ENCODE measurements at regions of chr20 and their contacts with region 1.

Region 1: GRCh38 chr20:46363800-46364634 is 42.4 kb downstream of the ELMO2 start:
- DNase-seq: peak; percentile 82 to 89 (median 86)
- H3K4me3 ChIP-seq: peak overlapping the region; percentile 73 to 95
- H3K4me3 Mint-ChIP-seq: peak overlapping the region; percentile 88 to 97 (median 92)
- H3K27ac ChIP-seq: peak overlapping the region; percentile 99
- H3K27ac Mint-ChIP-seq: peak overlapping the region; percentile 84 to 99 (median 98)
- H3K4me1 ChIP-seq: peaks cover 78% of the 10 kb centered on the region
- H3K4me1 Mint-ChIP-seq: peaks cover 63 to 83% (median 73%) of the 10 kb centered on the region in 4 donors
- H3K27me3 ChIP-seq: no peaks in the 10 kb centered on the region
- H3K27me3 Mint-ChIP-seq: no peaks in the 10 kb centered on the region

Region 2: DNA sequence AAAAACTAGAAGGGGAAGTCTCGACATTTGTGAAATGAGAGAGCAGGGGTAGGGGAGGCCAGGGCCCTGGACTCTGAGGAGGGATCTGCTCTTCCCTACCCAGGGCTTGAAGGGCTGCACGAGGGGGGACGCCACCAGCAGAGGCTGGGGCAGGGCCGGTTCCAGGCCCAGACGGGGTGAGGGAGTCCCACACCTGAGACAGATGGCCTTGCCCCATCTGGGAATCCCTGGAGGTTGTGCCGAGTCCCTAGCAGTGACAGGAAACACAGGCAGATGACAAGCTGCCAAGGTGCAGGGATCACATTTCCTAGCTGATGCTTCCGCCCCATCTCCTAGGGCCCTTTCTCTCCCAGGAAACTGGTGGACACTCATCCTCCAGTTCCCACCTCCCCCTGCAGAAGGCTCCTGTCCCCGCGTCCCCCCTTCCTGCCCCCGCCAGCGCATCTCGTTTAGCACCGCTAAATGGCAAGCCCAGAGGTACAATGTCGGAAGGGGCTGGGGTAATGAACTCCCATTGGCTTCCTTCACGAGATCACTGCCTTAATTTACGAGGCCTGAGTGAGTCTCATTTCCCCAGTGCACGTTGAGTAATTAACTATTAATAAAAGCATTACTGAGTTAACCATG is 20.6 kb before region 1 on chr20:
- CTCF ChIA-PET with region 1: interaction called, 6 read pairs
- POLR2A ChIA-PET with region 1: interaction called, 17 read pairs
- intact Hi-C with region 1: no loop called
- DNase-seq: no peak
- H3K4me3 ChIP-seq: no peak overlapping the region
- H3K4me3 Mint-ChIP-seq: peak overlapping the region; percentile 40 to 85 (median 71)
- H3K27ac ChIP-seq: no peak overlapping the region
- H3K27ac Mint-ChIP-seq: peak overlapping the region in 5 of 7 donors; percentile 26 to 68 (median 57)
- H3K4me1 ChIP-seq: peaks cover 20% of the 10 kb centered on the region
- H3K4me1 Mint-ChIP-seq: peaks cover 20 to 41% (median 24%) of the 10 kb centered on the region in 4 donors
- H3K27me3 ChIP-seq: peaks cover 11% of the 10 kb centered on the region
- H3K27me3 Mint-ChIP-seq: peaks cover 13 to 16% of the 10 kb centered on the region in 2 donors

Region 3: DNA sequence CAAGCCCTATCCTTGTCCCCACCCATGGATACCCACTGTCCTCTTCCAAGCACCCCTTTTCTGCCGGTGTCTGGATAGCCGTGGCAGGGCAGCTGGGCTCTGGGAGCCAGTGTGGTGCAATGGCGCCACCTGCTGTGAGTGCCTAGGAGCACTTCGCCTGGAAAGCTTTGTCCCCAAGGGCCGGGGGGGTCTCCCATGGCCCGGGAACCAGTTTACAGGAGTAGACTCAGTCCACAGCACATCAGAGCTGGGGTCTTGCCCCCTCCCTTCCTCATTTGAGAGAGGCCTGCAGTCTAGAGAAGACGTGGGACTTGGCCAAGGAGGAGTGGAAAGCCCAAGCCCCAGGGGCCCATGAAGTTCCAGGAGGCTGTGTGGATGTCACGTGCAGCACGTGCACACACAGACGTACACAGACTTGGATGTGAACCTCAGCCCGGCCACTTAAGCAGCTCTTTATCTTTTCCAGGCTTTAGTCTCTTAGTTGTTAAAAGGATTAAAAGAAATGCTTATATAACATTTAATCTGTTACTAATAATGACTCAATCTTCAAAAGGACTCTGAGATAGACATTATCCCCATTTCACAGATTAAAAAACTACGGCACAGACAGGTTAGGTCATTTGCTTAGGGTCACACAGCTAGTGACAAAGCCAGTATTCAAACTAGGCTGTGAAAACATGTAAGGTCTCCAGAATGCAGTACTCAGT is 14.8 kb before region 1 on chr20:
- CTCF ChIA-PET with region 1: interaction called, 6 read pairs
- POLR2A ChIA-PET with region 1: interaction called, 17 read pairs
- intact Hi-C with region 1: no loop called
- DNase-seq: peak in 4 of 5 donors; percentile 30 to 42 (median 36)
- H3K4me3 ChIP-seq: no peak overlapping the region
- H3K4me3 Mint-ChIP-seq: no peak overlapping the region
- H3K27ac ChIP-seq: no peak overlapping the region
- H3K27ac Mint-ChIP-seq: peak overlapping the region in 5 of 7 donors; percentile 9 to 82 (median 46)
- H3K4me1 ChIP-seq: peaks cover 5% of the 10 kb centered on the region
- H3K4me1 Mint-ChIP-seq: peaks cover 15 to 37% (median 21%) of the 10 kb centered on the region in 4 donors
- H3K27me3 ChIP-seq: no peaks in the 10 kb centered on the region
- H3K27me3 Mint-ChIP-seq: no peaks in the 10 kb centered on the region

Region 4: DNA sequence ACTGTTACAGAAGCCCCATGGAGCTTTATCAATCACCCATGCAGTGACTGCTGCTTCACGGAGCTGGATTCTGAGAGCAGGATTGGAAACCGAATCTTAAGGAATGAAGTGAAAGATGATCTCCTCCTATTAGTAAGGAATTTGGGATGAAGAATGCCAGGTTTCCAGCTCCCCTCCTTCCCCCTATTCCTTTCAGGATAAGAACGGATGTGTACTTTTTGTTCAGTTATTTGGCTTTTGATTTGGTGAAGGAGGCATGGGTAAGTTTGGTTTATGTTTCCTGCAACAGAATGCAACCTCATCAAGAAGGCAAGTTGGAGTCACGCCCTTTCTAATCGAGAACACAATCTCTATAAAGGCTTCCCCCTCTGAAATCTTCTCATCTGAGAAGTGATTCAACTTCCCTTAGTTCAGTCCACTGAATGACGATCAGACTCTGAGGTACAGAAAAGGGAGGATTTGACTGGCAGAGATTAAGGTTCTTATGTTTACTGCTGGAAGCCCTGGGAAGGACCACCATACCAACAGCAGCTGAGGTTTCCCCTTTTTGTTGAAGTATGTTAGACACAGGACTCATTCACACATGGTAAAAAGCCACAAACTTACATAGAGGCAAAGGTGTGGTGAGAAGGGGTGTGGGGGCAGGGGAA is 36.9 kb after region 1 on chr20:
- CTCF ChIA-PET with region 1: interaction called, 27 read pairs
- POLR2A ChIA-PET with region 1: no interaction called
- intact Hi-C with region 1: loop called (anchors 1 kb)
- DNase-seq: peak; percentile 80 to 88 (median 85)
- H3K4me3 ChIP-seq: peak overlapping the region; percentile 36 to 60
- H3K4me3 Mint-ChIP-seq: peak overlapping the region; percentile 67 to 89 (median 80)
- H3K27ac ChIP-seq: peak overlapping the region; percentile 76
- H3K27ac Mint-ChIP-seq: peak overlapping the region; percentile 84 to 97 (median 95)
- H3K4me1 ChIP-seq: peaks cover 72% of the 10 kb centered on the region
- H3K4me1 Mint-ChIP-seq: peaks cover 61 to 92% (median 76%) of the 10 kb centered on the region in 4 donors
- H3K27me3 ChIP-seq: no peaks in the 10 kb centered on the region
- H3K27me3 Mint-ChIP-seq: no peaks in the 10 kb centered on the region

Region 5: DNA sequence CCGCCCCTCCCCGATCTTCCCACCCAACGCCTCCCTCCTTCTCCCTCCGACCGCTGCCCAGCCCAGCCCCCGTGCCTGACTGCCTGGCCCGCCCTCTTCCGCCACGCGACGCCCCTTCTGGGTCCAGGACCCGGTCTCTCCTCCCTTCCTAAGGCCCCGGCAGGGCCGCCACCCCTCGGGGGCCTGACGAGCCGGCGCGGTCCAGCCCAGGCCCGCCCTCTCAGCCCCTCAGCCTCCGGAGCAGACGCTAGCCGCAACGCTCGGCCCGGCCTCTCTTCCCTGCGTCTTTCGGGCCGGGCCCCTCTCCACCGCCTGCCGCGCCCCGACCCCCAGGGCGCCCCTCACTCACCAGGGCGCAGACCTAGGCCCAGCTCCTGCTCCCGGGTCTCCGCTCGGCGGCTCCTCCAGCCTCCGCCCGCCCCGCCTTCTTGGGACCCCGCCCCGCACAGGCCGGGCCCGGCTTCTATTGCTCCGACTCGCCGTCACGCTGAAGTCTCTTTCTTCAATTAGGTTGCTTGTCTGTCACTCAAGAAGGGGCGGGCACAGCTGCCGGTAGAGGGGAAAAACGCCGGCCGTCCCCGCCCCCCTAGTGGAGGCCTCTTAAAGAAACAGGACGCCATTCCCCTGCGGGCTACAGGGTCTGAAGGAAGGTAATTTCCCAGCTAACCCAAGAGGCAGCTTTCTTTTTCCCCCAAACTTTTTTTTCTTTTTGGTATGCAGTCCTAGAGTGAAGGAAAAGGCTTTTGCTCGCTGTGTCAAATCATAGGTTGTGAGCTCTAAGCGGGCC is 42.4 kb after region 1 on chr20 and contains the start of gene ELMO2:
- CTCF ChIA-PET with region 1: interaction called, 27 read pairs
- POLR2A ChIA-PET with region 1: interaction called, 4 read pairs
- intact Hi-C with region 1: loop called (anchors 1 kb)
- DNase-seq: peak; percentile 94 to 98 (median 95)
- H3K4me3 ChIP-seq: peak within 1 kb of the TSS; percentile 64 to 73
- H3K4me3 Mint-ChIP-seq: peak within 1 kb of the TSS; percentile 91 to 99 (median 96)
- H3K27ac ChIP-seq: peak within 1 kb of the TSS; percentile 95
- H3K27ac Mint-ChIP-seq: peak within 1 kb of the TSS; percentile 96 to 99 (median 97)
- H3K4me1 ChIP-seq: peaks cover 63% of the 10 kb centered on the region
- H3K4me1 Mint-ChIP-seq: peaks cover 49 to 83% (median 66%) of the 10 kb centered on the region in 4 donors
- H3K27me3 ChIP-seq: no peaks in the 10 kb centered on the region
- H3K27me3 Mint-ChIP-seq: peaks cover 0 to 3% of the 10 kb centered on the region in 2 donors
- total RNA-seq, gene ELMO2: 65.1 to 70.7 TPM

Region 6: GRCh38 chr20:46411637-46412036 is 47.6 kb after region 1 on chr20:
- CTCF ChIA-PET with region 1: interaction called, 27 read pairs
- POLR2A ChIA-PET with region 1: interaction called, 4 read pairs
- intact Hi-C with region 1: loop called (anchors 1 kb)
- DNase-seq: no peak
- H3K4me3 ChIP-seq: no peak overlapping the region
- H3K4me3 Mint-ChIP-seq: no peak overlapping the region
- H3K27ac ChIP-seq: no peak overlapping the region
- H3K27ac Mint-ChIP-seq: peak overlapping the region in 3 of 7 donors; percentile 23 to 96 (median 43)
- H3K4me1 ChIP-seq: peaks cover 21% of the 10 kb centered on the region
- H3K4me1 Mint-ChIP-seq: peaks cover 17 to 33% (median 27%) of the 10 kb centered on the region in 4 donors
- H3K27me3 ChIP-seq: no peaks in the 10 kb centered on the region
- H3K27me3 Mint-ChIP-seq: peaks cover 4 to 19% of the 10 kb centered on the region in 2 donors